Activated CD4-positive, alpha-beta memory T cell treated with anti-CD3 and anti-CD28 coated beads for 36 hours (primary cell): ENCODE measurements at regions of chr5 and their contacts with region 1.

Region 1: GRCh38 chr5:134113902-134114875 is at the start of gene TCF7:
- DNase-seq: peak; percentile 86
- H3K4me3 Mint-ChIP-seq: peak within 1 kb of the TSS; percentile 84
- H3K27ac Mint-ChIP-seq: peak within 1 kb of the TSS; percentile 86
- H3K4me1 Mint-ChIP-seq: peaks cover 66% of the 10 kb centered on the region
- H3K27me3 Mint-ChIP-seq: no peaks in the 10 kb centered on the region
- total RNA-seq, gene TCF7: 59.3 to 65.6 TPM

Region 2: DNA sequence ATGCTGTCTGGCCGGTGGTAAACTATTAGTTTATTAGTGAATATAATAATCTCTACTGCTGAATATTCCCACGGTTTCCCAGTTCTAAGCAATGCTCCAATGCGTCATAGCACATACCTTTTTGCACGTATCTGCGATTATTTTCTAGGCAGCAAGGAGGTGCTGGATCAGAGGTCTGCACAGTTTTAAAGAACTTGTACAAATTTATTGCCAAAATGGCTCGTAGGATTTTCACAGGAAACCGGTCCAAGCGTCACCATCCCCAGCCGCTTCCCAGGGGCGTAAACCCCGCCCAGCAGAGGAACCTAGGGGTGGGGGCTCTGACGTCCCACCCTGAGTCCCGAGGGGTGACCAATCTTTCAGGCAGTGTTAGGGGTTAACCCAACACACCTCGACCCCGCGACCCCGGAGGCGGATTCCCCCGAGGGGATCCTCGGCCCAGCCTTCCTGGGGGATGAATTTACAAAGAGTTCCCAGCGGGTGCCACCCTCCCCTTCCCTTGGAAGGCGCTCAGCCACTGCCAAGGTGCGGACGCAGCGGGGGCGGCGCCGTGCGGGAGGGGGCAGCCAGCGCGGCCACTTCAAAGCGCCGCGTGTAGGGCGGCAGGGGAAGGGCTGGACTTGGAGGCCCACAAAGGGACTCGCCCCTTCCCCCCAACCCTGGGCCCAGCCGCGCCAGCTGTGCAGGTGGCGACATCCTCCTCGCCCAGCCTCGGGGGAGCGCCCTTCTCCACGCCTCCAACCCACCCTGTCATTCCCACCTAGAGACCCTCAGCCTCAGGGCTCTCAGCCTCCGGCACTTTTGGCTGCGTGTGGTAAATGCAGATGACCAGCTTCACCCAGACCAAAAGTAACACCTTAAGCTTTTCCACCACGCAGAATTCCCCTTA is 43.2 kb before region 1 on chr5:
- CTCF ChIA-PET with region 1: interaction called, 5 read pairs
- POLR2A ChIA-PET with region 1: interaction called, 6 read pairs
- intact Hi-C with region 1: loop called (anchors 1 kb)
- DNase-seq: peak; percentile 58
- H3K4me3 Mint-ChIP-seq: peak overlapping the region; percentile 77
- H3K27ac Mint-ChIP-seq: peak overlapping the region; percentile 92
- H3K4me1 Mint-ChIP-seq: peaks cover 63% of the 10 kb centered on the region
- H3K27me3 Mint-ChIP-seq: no peaks in the 10 kb centered on the region

Region 3: GRCh38 chr5:134125039-134126015 is 11.1 kb after region 1 on chr5:
- CTCF ChIA-PET with region 1: interaction called, 13 read pairs
- POLR2A ChIA-PET with region 1: interaction called, 37 read pairs
- intact Hi-C with region 1: loop called (anchors 1 kb)
- DNase-seq: peak; percentile 49
- H3K4me3 Mint-ChIP-seq: peak overlapping the region; percentile 69
- H3K27ac Mint-ChIP-seq: peak overlapping the region; percentile 90
- H3K4me1 Mint-ChIP-seq: peaks cover 99% of the 10 kb centered on the region
- H3K27me3 Mint-ChIP-seq: no peaks in the 10 kb centered on the region

Region 4: DNA sequence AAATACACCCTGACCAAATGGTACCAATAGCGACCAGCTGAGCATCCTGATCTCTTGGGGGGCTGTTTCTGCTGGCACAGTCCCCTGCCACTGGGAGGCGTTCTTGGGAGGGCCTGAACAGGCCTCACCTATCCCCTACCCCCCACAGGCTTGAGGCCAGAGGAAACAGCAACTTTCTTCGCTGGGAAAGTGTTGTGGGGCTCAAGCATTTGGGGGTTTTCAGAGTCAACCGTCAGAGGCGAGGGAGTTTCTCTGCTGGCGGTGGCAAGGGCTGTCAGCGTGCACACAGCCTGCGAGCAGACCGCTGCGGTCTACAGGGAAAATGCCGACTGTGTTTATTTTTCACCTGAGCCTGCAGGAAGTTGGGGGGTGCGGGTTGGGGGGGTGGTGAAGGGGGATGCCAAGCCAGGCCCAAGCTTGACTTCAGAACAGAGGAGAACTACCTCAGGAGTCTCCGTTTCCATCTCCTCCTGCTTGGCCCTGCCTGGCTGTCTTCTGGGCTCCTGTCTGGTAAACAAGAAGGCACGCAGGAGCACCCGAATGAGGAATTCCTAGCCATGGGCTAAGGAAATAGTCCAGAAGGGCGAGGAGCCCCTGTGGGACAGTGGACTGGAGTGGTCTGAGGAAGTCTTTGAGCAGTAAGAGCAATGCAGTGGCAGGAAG is 18.3 kb after region 1 on chr5:
- CTCF ChIA-PET with region 1: interaction called, 253 read pairs
- POLR2A ChIA-PET with region 1: interaction called, 43 read pairs
- intact Hi-C with region 1: loop called (anchors 1 kb)
- DNase-seq: peak; percentile 89
- H3K4me3 Mint-ChIP-seq: peak overlapping the region; percentile 51
- H3K27ac Mint-ChIP-seq: peak overlapping the region; percentile 90
- H3K4me1 Mint-ChIP-seq: peaks cover 97% of the 10 kb centered on the region
- H3K27me3 Mint-ChIP-seq: no peaks in the 10 kb centered on the region

Region 5: GRCh38 chr5:134145779-134146581 is 31.8 kb after region 1 on chr5:
- CTCF ChIA-PET with region 1: interaction called, 253 read pairs
- POLR2A ChIA-PET with region 1: interaction called, 4 read pairs
- intact Hi-C with region 1: no loop called
- DNase-seq: peak; percentile 89
- H3K4me3 Mint-ChIP-seq: no peak overlapping the region
- H3K27ac Mint-ChIP-seq: peak overlapping the region; percentile 57
- H3K4me1 Mint-ChIP-seq: peaks cover 24% of the 10 kb centered on the region
- H3K27me3 Mint-ChIP-seq: no peaks in the 10 kb centered on the region

Region 6: DNA sequence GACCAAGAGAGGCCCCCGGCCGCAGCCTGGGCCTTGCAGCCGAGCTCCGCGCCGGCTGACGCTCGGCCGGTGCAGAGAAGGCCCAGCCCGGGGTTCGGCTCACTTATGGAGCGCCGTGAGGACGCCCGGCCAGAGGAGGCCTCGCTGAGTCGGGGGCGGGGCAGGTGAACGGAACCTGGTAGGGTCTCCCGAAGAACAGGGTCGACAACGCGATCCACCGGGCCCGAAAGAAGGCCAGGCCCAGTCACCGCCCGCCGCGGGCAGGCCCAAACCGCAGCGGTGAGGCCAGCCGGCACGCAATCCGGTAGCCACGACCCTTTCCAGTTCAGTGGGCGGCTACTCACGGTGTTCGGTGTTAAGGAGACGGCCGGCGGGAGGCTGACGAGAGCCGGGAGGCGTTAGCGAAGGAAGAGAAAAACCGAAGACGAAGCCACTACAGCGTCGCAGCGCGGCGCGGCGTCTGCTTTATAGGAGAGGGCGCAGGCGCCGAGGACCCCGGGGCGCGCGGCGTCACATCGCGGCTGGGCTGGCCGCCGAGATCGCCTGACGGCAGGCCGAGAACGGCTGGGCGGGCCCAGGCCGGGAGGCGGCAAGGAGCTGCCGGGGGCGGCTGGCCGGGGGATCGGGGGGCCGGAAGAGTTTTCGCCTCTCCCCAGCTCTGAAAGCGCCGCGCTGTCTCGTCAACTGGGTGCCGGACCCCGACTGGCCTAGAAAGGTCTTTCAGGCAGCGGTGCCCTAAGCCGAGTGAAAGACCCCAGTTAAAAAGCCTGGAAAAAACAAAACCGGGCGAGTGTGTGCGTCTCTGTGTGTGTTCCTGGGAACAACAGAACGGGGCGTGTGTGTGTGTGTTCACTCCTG is 62.6 kb after region 1 on chr5 and contains the start of gene SKP1:
- CTCF ChIA-PET with region 1: interaction called, 3 read pairs
- POLR2A ChIA-PET with region 1: interaction called, 5 read pairs
- intact Hi-C with region 1: loop called (anchors 2 kb)
- DNase-seq: peak; percentile 88
- H3K4me3 Mint-ChIP-seq: peak within 1 kb of the TSS; percentile 95
- H3K27ac Mint-ChIP-seq: peak within 1 kb of the TSS; percentile 96
- H3K4me1 Mint-ChIP-seq: peaks cover 33% of the 10 kb centered on the region
- H3K27me3 Mint-ChIP-seq: no peaks in the 10 kb centered on the region
- total RNA-seq, gene SKP1: 284 to 286 TPM